RWPE1 (cell line): ENCODE measurements at regions of chr20 and their contacts with region 1.

Region 1: GRCh38 chr20:45293041-45294002 is 13.3 kb upstream of the RBPJL start:
- DNase-seq: peak; percentile 96
- H3K27ac ChIP-seq: peak overlapping the region; percentile 57
- CTCF ChIP-seq: peak; percentile 100

Region 2: DNA sequence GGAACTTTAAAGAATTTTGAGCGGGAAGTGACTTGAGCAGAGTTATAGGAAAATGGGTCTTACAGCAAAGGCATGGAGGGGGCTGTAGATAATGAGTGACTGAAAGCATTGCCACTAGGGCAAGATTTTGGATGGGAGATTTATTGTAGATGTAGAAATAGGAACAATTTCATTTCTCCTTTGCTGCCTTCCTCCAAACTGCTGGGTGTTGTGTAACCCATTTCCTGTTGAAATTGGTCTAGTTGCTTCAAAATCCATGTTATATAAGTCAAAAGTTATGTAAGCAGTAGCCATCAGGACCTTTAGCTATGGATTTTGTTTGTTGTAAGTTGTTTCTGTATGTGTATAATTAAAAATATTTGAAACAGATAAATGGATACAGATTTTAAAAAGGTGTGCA is 396.7 kb before region 1 on chr20:
- CTCF ChIA-PET with region 1: no interaction called
- POLR2A ChIA-PET with region 1: no interaction called
- DNase-seq: no peak
- H3K27ac ChIP-seq: no peak overlapping the region
- CTCF ChIP-seq: no peak

Region 3: GRCh38 chr20:45029884-45030283 is 263.4 kb before region 1 on chr20:
- CTCF ChIA-PET with region 1: no interaction called
- POLR2A ChIA-PET with region 1: no interaction called
- DNase-seq: no peak
- H3K27ac ChIP-seq: no peak overlapping the region
- CTCF ChIP-seq: no peak

Region 4: GRCh38 chr20:45052698-45053429 is 240.5 kb before region 1 on chr20:
- CTCF ChIA-PET with region 1: interaction called, 13 read pairs
- POLR2A ChIA-PET with region 1: no interaction called
- DNase-seq: no peak
- H3K27ac ChIP-seq: no peak overlapping the region
- CTCF ChIP-seq: no peak

Region 5: DNA sequence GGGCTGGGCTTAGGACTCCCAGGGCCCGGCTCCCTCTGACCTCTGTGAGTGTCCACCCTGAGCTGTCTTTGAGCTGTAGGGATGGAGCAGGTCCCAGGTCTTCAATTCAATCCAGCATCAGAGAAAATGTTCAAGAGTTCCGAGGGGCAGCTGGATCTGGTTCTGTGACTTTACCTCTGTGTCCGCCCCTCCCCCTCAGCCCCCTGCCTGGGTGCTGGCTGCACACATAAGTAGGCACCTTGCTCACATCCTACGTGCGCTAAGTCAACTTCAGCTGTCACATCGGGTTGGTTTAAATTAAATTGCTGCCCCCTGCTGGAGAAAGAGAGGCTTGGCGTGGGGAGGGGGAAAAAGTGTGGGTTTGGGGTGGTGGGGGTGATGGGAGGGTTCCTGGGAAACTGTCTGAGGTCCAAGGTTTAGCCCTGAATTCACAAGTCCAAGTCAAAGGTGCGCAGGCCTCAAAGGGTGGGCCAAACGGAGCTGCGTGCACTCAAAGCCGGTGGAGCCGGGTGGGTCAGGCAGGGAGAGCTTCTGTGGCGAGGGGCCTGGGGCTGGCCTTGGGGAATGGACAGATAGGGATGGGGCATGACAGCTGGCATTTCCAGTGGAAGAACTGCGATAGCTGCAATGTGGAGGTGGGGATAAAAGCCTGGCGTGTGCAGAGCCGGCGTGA is 181.4 kb before region 1 on chr20:
- CTCF ChIA-PET with region 1: interaction called, 29 read pairs
- POLR2A ChIA-PET with region 1: no interaction called
- DNase-seq: no peak
- H3K27ac ChIP-seq: no peak overlapping the region
- CTCF ChIP-seq: peak; percentile 66

Region 6: GRCh38 chr20:45187662-45188061 is 105.7 kb before region 1 on chr20:
- CTCF ChIA-PET with region 1: interaction called, 10 read pairs
- POLR2A ChIA-PET with region 1: no interaction called
- DNase-seq: no peak
- H3K27ac ChIP-seq: no peak overlapping the region
- CTCF ChIP-seq: no peak

Region 7: GRCh38 chr20:45306431-45306982 is 13.2 kb after region 1 on chr20 and contains the start of gene RBPJL:
- CTCF ChIA-PET with region 1: interaction called, 47 read pairs
- POLR2A ChIA-PET with region 1: no interaction called
- DNase-seq: peak; percentile 49
- H3K27ac ChIP-seq: no peak within 1 kb of the TSS
- CTCF ChIP-seq: peak; percentile 98

Region 8: GRCh38 chr20:45436732-45437391 is 143.5 kb after region 1 on chr20:
- CTCF ChIA-PET with region 1: interaction called, 13 read pairs
- POLR2A ChIA-PET with region 1: no interaction called
- DNase-seq: peak; percentile 97
- H3K27ac ChIP-seq: peak overlapping the region; percentile 51
- CTCF ChIP-seq: peak; percentile 99

Region 9: DNA sequence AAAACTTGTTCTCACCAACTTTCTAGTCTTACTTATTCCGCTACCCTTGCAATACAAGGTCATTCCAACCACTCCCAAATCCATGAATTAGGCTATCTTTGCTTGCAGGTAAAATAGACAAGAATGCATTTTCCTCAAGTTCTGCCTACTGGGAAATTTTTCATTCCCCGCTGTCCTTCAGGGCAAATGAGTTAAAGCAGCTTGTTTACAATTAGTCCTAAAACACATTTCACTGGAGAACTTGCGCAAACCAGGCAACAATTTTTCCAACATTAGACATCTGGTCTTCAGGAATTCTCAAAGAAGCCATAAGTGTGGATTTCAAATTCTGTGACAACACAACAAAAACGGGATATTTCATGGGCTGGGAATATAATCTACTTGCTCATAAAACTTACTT is 449.3 kb after region 1 on chr20:
- CTCF ChIA-PET with region 1: no interaction called
- POLR2A ChIA-PET with region 1: no interaction called
- DNase-seq: no peak
- H3K27ac ChIP-seq: no peak overlapping the region
- CTCF ChIP-seq: no peak